H1 (cell line): ENCODE measurements at regions of chr1 and their contacts with region 1.

Region 1: DNA sequence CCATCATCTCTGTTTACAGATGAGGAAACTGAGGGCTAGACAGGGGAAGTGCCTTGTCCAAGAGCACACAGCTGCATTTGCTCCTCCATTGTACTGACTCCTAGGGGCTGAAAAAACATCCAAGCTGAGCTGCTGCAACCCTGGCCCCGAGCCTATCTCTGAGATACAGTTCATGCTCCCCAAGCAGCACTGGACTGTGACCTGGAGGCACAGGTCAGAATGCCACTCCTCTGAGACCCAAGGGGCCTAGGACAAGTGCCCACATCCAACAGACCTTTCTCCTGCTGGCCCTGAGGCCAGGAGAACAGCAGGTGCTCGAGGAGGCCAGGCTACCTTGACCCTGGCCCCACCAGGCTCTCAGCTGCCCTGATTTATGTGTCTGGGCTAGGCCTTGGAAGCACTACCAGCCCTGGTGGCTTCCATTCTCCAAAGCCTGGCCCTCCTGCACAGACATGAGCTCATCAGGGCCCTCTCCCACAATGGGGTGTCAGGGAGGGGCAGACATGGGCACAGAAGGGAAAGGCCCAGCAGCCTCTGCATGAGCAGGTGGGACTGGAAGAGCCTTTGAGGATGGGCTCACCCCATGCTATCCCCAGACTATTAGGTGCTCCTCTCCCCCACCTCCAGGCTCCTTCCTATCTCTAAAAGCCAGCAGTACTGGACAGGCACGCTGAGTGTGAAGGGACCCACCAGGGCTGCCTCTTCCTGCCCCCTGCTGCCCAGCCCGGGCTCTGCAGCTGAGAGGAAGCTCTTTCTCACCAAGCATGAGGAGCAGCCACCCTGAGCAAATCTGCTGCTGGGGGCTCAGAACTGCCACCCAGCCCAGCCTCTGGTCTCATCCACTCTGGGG is 18.8 kb downstream of the ADGRB2 start:
- DNase-seq: peak in 1 of 2 experiments; percentile 88
- H3K4me3 ChIP-seq: no peak overlapping the region
- H3K27ac ChIP-seq: no peak overlapping the region
- H3K4me1 ChIP-seq: peaks cover 0 to 8% (median 6%) of the 10 kb centered on the region in 4 experiments; a peak in 6 of 7 replicates
- H3K27me3 ChIP-seq: no peaks in the 10 kb centered on the region
- CTCF ChIP-seq: peak in 2 of 3 experiments; percentile 85 to 86; a peak in 3 of 4 replicates
- EP300 ChIP-seq: no peak
- POLR2A ChIP-seq: no peak
- RAD21 ChIP-seq: peak; percentile 68 to 82

Region 2: GRCh38 chr1:31683997-31684396 is 61.3 kb before region 1 on chr1:
- CTCF ChIA-PET with region 1: interaction called, 11 read pairs
- POLR2A ChIA-PET with region 1: no interaction called
- DNase-seq: peak in 1 of 2 experiments; percentile 82
- H3K4me3 ChIP-seq: no peak overlapping the region
- H3K27ac ChIP-seq: no peak overlapping the region
- H3K4me1 ChIP-seq: peaks cover 0 to 1% (median 0%) of the 10 kb centered on the region in 4 experiments; a peak in 2 of 7 replicates
- H3K27me3 ChIP-seq: no peaks in the 10 kb centered on the region
- CTCF ChIP-seq: peak; percentile 72 to 93 (median 84)
- EP300 ChIP-seq: no peak
- POLR2A ChIP-seq: no peak
- RAD21 ChIP-seq: peak; percentile 57 to 66

Region 3: GRCh38 chr1:31699341-31699891 is 45.9 kb before region 1 on chr1:
- CTCF ChIA-PET with region 1: interaction called, 27 read pairs
- POLR2A ChIA-PET with region 1: no interaction called
- DNase-seq: no peak
- H3K4me3 ChIP-seq: no peak overlapping the region
- H3K27ac ChIP-seq: no peak overlapping the region
- H3K4me1 ChIP-seq: peaks cover 4 to 13% (median 5%) of the 10 kb centered on the region in 4 experiments
- H3K27me3 ChIP-seq: no peaks in the 10 kb centered on the region
- CTCF ChIP-seq: no peak
- EP300 ChIP-seq: no peak
- POLR2A ChIP-seq: no peak
- RAD21 ChIP-seq: no peak

Region 4: GRCh38 chr1:31715087-31715872 is 30.0 kb before region 1 on chr1:
- CTCF ChIA-PET with region 1: interaction called, 130 read pairs
- POLR2A ChIA-PET with region 1: interaction called, 3 read pairs
- DNase-seq: peak; percentile 94 to 95
- H3K4me3 ChIP-seq: peak overlapping the region; percentile 30 to 67 (median 58); a peak in 7 of 8 replicates
- H3K27ac ChIP-seq: no peak overlapping the region; the same call in 1 of the 2 replicates
- H3K4me1 ChIP-seq: peaks cover 0 to 5% (median 3%) of the 10 kb centered on the region in 4 experiments; a peak in 4 of 7 replicates
- H3K27me3 ChIP-seq: no peaks in the 10 kb centered on the region; a peak in 1 of 7 replicates
- CTCF ChIP-seq: peak; percentile 82 to 92 (median 89)
- EP300 ChIP-seq: no peak
- POLR2A ChIP-seq: 0 out of 3 replicates have a peak, but pooled peaks of 1 of the 2 experiments have one; percentile 8
- RAD21 ChIP-seq: peak; percentile 47 to 57

Region 5: GRCh38 chr1:31730336-31731048 is 14.8 kb before region 1 on chr1:
- CTCF ChIA-PET with region 1: interaction called, 68 read pairs
- POLR2A ChIA-PET with region 1: interaction called, 4 read pairs
- DNase-seq: no peak
- H3K4me3 ChIP-seq: no peak overlapping the region
- H3K27ac ChIP-seq: no peak overlapping the region
- H3K4me1 ChIP-seq: peaks cover 0 to 3% (median under 1%) of the 10 kb centered on the region in 4 experiments; a peak in 2 of 7 replicates
- H3K27me3 ChIP-seq: no peaks in the 10 kb centered on the region
- CTCF ChIP-seq: no peak
- EP300 ChIP-seq: no peak
- POLR2A ChIP-seq: no peak
- RAD21 ChIP-seq: no peak

Region 6: GRCh38 chr1:31771891-31772668 is 26.8 kb after region 1 on chr1:
- CTCF ChIA-PET with region 1: interaction called, 15 read pairs
- POLR2A ChIA-PET with region 1: no interaction called
- DNase-seq: no peak
- H3K4me3 ChIP-seq: peak overlapping the region; percentile 41 to 58 (median 50)
- H3K27ac ChIP-seq: no peak overlapping the region
- H3K4me1 ChIP-seq: peaks cover 4 to 18% (median 9%) of the 10 kb centered on the region in 4 experiments
- H3K27me3 ChIP-seq: peaks cover 26 to 49% (median 44%) of the 10 kb centered on the region in 4 experiments
- CTCF ChIP-seq: no peak
- EP300 ChIP-seq: no peak
- POLR2A ChIP-seq: no peak
- RAD21 ChIP-seq: no peak

Region 7: GRCh38 chr1:31789259-31790065 is 44.1 kb after region 1 on chr1:
- CTCF ChIA-PET with region 1: interaction called, 32 read pairs
- POLR2A ChIA-PET with region 1: interaction called, 3 read pairs
- DNase-seq: peak; percentile 60 to 100
- H3K4me3 ChIP-seq: peak overlapping the region; percentile 79 to 89 (median 88); a peak in 6 of 8 replicates
- H3K27ac ChIP-seq: no peak overlapping the region
- H3K4me1 ChIP-seq: peaks cover 3 to 8% (median 4%) of the 10 kb centered on the region in 4 experiments; a peak in 5 of 7 replicates
- H3K27me3 ChIP-seq: no peaks in the 10 kb centered on the region
- CTCF ChIP-seq: peak; percentile 95 to 98 (median 97)
- EP300 ChIP-seq: peak in 1 of 2 experiments; percentile 42; a peak in 1 of 3 replicates
- POLR2A ChIP-seq: no peak
- RAD21 ChIP-seq: peak; percentile 97 to 100